Gastrocnemius medialis (tissue), 4 donors: ENCODE measurements at regions of chr3 and their contacts with region 1.

Region 1: DNA sequence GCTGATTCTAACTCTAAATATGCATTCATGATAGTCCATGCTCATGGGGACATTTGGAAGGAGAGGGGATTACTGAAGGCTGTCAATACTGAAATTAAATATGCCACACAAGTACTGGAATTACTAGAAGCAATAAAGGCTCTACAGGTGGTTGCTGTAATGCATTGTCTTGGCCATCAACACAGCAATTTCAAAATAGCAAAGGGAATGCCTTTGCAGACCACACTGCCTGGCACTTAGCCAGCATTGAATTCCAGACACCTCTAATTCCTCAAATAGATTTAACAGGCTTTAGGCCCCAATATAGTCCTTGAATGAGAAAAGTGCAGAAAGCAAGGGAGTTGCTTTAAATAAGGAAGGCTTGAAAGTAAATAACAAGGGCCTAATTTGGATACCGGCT is 115.8 kb upstream of the PLCL2 start:
- DNase-seq: no peak
- ATAC-seq: no peak
- H3K4me3 ChIP-seq: no peak overlapping the region
- H3K27ac ChIP-seq: peak overlapping the region; percentile 76 to 94 (median 82)
- H3K4me1 ChIP-seq: peaks cover 43% of the 10 kb centered on the region in 2 donors
- H3K27me3 ChIP-seq: no peaks in the 10 kb centered on the region
- CTCF ChIP-seq: no peak
- POLR2A ChIP-seq: no peak

Region 2: DNA sequence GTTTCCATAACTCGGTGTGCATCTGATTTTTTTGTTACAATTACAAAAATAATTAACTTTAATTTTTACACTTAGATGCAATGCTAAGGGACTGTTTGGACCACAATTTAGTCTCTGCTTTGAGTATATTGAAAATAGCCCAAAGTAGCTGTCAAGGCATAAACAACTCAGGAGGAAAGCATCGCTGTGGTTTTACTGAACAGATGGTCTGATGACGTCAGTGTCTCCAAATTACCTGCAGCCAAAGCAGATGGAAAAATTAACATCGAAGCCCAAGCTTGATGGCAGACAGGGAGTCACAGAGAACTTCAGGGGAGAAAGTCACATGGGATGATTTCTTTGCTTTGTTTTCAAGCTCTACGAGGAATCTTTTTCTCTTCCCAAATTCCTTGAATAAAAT is 32.7 kb after region 1 on chr3:
- in situ Hi-C with region 1: no loop called
- intact Hi-C with region 1: loop called (anchors 1 kb)
- DNase-seq: no peak
- ATAC-seq: no peak
- H3K4me3 ChIP-seq: no peak overlapping the region
- H3K27ac ChIP-seq: no peak overlapping the region
- H3K4me1 ChIP-seq: peaks cover 13 to 19% of the 10 kb centered on the region in 2 donors
- H3K27me3 ChIP-seq: no peaks in the 10 kb centered on the region
- CTCF ChIP-seq: no peak
- POLR2A ChIP-seq: no peak

Region 3: GRCh38 chr3:16842272-16843270 is 73.6 kb after region 1 on chr3:
- in situ Hi-C with region 1: no loop called
- intact Hi-C with region 1: loop called (anchors 2 kb)
- DNase-seq: peak; percentile 22 to 52
- ATAC-seq: peak in 1 of 2 donors; percentile 8
- H3K4me3 ChIP-seq: peak overlapping the region; percentile 43 to 51 (median 50)
- H3K27ac ChIP-seq: peak overlapping the region; percentile 73 to 90 (median 79)
- H3K4me1 ChIP-seq: peaks cover 71% of the 10 kb centered on the region in 2 donors
- H3K27me3 ChIP-seq: no peaks in the 10 kb centered on the region
- CTCF ChIP-seq: no peak
- POLR2A ChIP-seq: no peak

Region 4: DNA sequence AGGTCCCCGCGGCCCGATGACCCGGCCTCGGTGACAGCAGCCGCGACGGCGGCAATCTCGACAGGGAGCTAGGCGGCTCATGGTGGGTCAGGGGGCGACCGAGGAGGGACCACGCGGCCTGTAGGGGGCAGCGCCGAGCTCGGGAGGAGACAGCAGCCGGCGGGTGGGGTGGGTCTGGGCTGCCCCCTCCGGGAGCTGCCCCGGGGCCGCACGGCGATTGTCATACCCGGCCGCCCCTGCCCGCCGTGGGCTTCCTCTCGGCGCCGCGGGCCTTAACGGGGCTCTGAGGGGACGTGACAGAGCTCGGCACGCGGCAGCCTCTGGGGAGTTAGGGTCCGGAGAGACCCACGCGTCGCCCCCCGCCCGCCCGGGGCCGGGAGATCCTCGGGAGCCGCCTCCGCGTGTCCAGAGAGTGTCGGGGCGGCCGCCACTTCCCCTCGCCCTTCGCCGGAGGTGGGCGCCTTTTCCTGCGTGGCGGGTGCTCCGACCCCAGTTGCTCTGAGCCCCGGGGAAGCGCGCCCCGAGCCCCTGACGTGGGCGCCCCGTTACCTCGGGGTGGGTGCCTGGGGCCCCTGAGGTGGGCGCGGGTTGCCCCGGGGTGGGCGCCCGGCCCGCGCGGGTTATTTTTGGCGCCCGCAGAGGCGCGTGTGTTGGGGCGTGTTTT is 115.3 kb after region 1 on chr3:
- in situ Hi-C with region 1: no loop called
- intact Hi-C with region 1: loop called (anchors 5 kb)
- DNase-seq: peak; percentile 66 to 78
- ATAC-seq: peak; percentile 47 to 63
- H3K4me3 ChIP-seq: peak overlapping the region; percentile 87 to 93 (median 90)
- H3K27ac ChIP-seq: peak overlapping the region; percentile 93 to 98 (median 96)
- H3K4me1 ChIP-seq: peaks cover 55 to 59% of the 10 kb centered on the region in 2 donors
- H3K27me3 ChIP-seq: no peaks in the 10 kb centered on the region
- CTCF ChIP-seq: peak; percentile 64 to 82 (median 76)
- POLR2A ChIP-seq: peak in 1 of 2 donors; percentile 36

Region 5: GRCh38 chr3:17032407-17033034 is 263.6 kb after region 1 on chr3:
- in situ Hi-C with region 1: no loop called
- intact Hi-C with region 1: loop called (anchors 10 kb)
- DNase-seq: no peak
- ATAC-seq: peak; percentile 61 to 65
- H3K4me3 ChIP-seq: no peak overlapping the region
- H3K27ac ChIP-seq: peak overlapping the region in 3 of 4 donors; percentile 3 to 48 (median 32)
- H3K4me1 ChIP-seq: peaks cover 15 to 16% of the 10 kb centered on the region in 2 donors
- H3K27me3 ChIP-seq: no peaks in the 10 kb centered on the region
- CTCF ChIP-seq: peak; percentile 56 to 76 (median 61)
- POLR2A ChIP-seq: no peak